ENCODE measurements at regions of chr1 and their contacts with region 1.

Region 1: DNA sequence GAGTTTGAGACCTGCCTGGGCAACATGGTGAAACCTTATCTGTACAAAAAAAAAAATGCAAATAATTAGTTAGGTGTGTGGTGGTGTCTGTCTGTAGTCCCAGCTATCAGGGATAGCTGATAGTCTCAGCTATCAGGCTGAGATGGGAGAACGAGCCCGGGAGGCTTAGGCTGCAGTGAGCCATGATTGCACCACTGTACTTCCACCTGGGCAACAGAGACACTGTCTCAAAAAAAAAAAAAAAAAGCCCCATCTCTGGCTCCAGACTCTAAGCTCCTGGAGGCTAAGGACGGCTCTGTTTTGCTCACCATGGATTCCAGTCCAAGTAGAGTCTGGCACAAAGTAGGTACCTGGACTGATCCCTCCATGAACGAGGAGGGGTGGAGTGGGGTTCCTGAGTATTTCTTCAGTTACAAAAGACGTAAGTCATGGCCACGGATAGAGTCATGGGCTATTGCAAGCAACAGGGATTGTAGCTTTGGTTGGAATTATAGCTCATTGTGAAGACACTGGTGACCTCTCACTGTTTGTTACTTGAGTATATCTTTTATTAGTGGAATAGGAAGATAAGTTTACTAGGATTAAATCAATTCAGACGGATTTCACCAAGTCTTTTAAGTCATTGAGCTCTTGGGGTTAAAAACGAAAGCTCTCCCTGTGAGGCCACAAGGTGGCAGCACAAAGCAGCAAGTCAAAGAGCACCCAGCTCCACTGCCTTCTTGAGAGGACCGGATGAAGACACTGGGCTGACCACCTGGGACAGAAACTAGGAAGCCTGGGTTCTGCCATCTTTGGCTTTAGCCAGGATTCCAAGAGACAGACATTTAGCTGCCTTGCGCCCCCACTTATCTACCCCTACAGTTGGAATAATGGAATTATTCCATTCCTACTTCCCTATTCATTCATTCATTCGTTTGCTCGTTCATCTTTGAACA is 35.6 kb upstream of the TMEM61 start:
- DNase-seq: peak; percentile 79
- H3K4me3 ChIP-seq: no peak overlapping the region
- H3K27ac ChIP-seq: no peak overlapping the region
- H3K4me1 ChIP-seq: peaks cover 4% of the 10 kb centered on the region
- H3K27me3 ChIP-seq: peaks cover 0 to 4% of the 10 kb centered on the region in 2 experiments
- CTCF ChIP-seq: peak; percentile 81 to 86
- POLR2A ChIP-seq: no peak

Region 2: GRCh38 chr1:54894271-54894670 is 50.6 kb before region 1 on chr1:
- CTCF ChIA-PET with region 1: interaction called, 12 read pairs
- POLR2A ChIA-PET with region 1: no interaction called
- dilution Hi-C with region 1: no loop called
- intact Hi-C with region 1: no loop called
- DNase-seq: no peak
- H3K4me3 ChIP-seq: no peak overlapping the region
- H3K27ac ChIP-seq: no peak overlapping the region
- H3K4me1 ChIP-seq: peaks cover 11% of the 10 kb centered on the region
- H3K27me3 ChIP-seq: no peaks in the 10 kb centered on the region
- CTCF ChIP-seq: no peak
- POLR2A ChIP-seq: no peak

Region 3: GRCh38 chr1:54934869-54935268 is 10.0 kb before region 1 on chr1:
- CTCF ChIA-PET with region 1: interaction called, 17 read pairs
- POLR2A ChIA-PET with region 1: no interaction called
- dilution Hi-C with region 1: no loop called
- intact Hi-C with region 1: no loop called
- DNase-seq: peak; percentile 37
- H3K4me3 ChIP-seq: no peak overlapping the region
- H3K27ac ChIP-seq: no peak overlapping the region
- H3K4me1 ChIP-seq: peaks cover 2% of the 10 kb centered on the region
- H3K27me3 ChIP-seq: peaks cover 2 to 10% of the 10 kb centered on the region in 2 experiments
- CTCF ChIP-seq: no peak
- POLR2A ChIP-seq: no peak

Region 4: DNA sequence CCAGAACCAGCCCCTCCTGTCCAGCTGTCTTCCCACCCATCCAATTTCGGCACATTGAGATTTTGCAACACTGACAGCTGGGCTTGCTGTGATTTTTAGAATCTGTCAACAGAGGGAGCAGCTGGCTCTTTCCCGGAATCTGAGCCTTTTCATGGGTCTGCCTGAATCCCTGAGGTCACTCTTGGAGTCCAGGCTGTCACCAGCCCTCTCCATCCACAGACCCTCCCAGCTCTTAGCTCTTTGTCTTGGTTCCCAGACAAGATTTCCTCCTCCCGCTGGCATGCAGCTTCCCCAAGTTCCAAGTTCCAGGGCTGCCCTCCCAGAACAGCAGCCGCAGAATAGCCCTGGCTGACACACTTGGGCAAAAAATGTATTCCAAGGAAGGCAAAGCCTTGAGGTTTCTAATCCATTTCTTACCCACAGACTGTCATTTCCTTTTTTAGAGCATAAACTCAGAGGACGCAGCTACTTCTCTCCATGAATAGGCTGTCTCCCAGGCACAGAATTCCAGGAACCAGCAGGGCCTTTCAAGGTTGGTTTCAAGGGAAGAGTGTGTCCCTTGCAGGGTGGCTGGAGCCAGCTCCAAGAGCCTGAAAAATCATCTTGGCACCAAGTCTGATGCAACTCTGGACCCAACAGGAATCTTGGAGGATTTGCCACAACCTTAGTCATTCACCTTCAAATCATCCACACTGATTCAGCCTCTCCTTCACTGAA is 28.5 kb after region 1 on chr1:
- CTCF ChIA-PET with region 1: interaction called, 918 read pairs
- POLR2A ChIA-PET with region 1: no interaction called
- dilution Hi-C with region 1: no loop called
- intact Hi-C with region 1: no loop called
- DNase-seq: no peak
- H3K4me3 ChIP-seq: no peak overlapping the region
- H3K27ac ChIP-seq: no peak overlapping the region
- H3K4me1 ChIP-seq: peaks cover 8% of the 10 kb centered on the region
- H3K27me3 ChIP-seq: peaks cover 2 to 6% of the 10 kb centered on the region in 2 experiments
- CTCF ChIP-seq: peak in 1 of 2 donors; percentile 32
- POLR2A ChIP-seq: no peak

Region 5: GRCh38 chr1:55007625-55008024 is 62.7 kb after region 1 on chr1:
- CTCF ChIA-PET with region 1: interaction called, 31 read pairs
- POLR2A ChIA-PET with region 1: no interaction called
- dilution Hi-C with region 1: no loop called
- intact Hi-C with region 1: no loop called
- DNase-seq: no peak
- H3K4me3 ChIP-seq: no peak overlapping the region
- H3K27ac ChIP-seq: no peak overlapping the region
- H3K4me1 ChIP-seq: no peaks in the 10 kb centered on the region
- H3K27me3 ChIP-seq: no peaks in the 10 kb centered on the region
- CTCF ChIP-seq: no peak
- POLR2A ChIP-seq: no peak

Region 6: GRCh38 chr1:55088413-55088812 is 143.5 kb after region 1 on chr1:
- CTCF ChIA-PET with region 1: no interaction called
- POLR2A ChIA-PET with region 1: no interaction called
- dilution Hi-C with region 1: no loop called
- intact Hi-C with region 1: no loop called
- DNase-seq: no peak
- H3K4me3 ChIP-seq: no peak overlapping the region
- H3K27ac ChIP-seq: no peak overlapping the region
- H3K4me1 ChIP-seq: no peaks in the 10 kb centered on the region
- H3K27me3 ChIP-seq: no peaks in the 10 kb centered on the region
- CTCF ChIP-seq: no peak
- POLR2A ChIP-seq: no peak

Measured in endothelial cell of umbilical vein (primary cell).